ENCODE measurements at regions of chr2 and their contacts with region 1.

Region 1: DNA sequence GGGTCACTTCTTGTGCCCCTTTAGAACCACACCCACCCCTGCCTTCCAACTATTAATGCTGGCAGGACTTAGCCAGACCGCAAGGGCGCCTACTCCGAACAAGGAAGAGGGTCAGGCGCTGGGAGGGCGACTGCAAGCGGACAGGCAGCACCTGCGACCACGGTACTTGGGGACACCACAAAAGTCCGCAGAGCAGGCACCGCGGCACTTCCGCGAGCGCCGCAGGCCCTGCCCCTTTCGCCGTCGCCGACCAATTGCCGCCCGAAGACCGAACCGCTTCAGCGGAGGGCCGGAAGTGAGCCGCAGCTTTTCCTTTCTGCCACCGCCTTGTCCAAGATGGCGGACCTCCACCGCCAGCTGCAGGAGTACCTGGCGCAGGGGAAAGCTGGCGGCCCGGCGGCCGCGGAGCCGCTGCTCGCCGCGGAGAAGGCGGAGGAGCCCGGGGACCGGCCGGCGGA is at the start of gene SFT2D3:
- DNase-seq: peak; percentile 89
- H3K4me3 Mint-ChIP-seq: peak within 1 kb of the TSS; percentile 92
- H3K27ac Mint-ChIP-seq: peak within 1 kb of the TSS; percentile 97
- H3K4me1 Mint-ChIP-seq: peaks cover 35% of the 10 kb centered on the region
- H3K27me3 Mint-ChIP-seq: no peaks in the 10 kb centered on the region
- total RNA-seq, gene SFT2D3: 6.6 and 7.1 TPM in 2 replicates

Region 2: DNA sequence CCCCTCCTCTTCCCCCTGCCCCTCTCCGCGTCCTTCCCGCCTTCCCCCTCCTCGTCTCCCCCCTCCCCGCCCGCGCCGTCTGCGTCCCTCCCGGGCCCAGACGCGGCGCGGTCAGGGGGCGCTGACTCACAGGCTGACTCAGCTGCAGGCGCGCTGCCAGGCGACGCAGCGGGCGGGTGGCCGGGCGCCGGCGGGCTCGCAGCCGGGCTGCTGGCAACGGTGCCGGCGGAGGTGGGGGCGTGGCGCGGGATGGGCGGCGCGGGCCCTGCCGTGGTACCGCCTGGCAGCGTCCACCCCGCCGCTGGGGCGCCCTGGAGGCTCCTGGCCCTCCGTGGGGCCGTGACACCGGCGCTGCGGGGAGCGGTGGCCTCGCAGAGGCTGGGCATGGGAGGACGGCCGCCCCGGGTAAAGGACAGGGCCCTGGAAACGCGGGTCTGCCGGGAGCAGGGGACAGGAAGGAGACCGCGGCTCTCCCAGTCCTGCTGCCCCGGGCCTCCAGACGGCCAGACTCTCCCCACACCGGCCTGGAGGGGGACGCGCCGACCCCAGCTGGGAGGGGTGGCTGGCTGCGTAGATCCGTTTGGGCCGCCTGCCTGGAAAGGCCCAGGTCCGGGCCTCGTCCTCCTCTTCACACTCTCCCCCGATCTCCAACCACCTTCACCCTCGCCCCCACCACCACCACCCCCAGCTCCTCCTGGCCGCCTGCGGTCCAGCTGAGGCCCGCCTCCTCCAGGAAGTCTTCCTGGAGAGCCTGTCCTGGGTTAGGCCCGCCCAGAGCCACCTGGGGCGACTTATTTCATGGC is 293.0 kb before region 1 on chr2:
- intact Hi-C with region 1: loop called (anchors 5 kb)
- DNase-seq: peak; percentile 80
- H3K4me3 Mint-ChIP-seq: peak overlapping the region; percentile 53
- H3K27ac Mint-ChIP-seq: peak overlapping the region; percentile 71
- H3K4me1 Mint-ChIP-seq: peaks cover 28% of the 10 kb centered on the region
- H3K27me3 Mint-ChIP-seq: peaks cover 15% of the 10 kb centered on the region

Region 3: GRCh38 chr2:127649684-127650040 is 51.6 kb before region 1 on chr2:
- intact Hi-C with region 1: loop called (anchors 2 kb)
- DNase-seq: peak; percentile 68
- H3K4me3 Mint-ChIP-seq: no peak overlapping the region
- H3K27ac Mint-ChIP-seq: no peak overlapping the region
- H3K4me1 Mint-ChIP-seq: peaks cover 5% of the 10 kb centered on the region
- H3K27me3 Mint-ChIP-seq: peaks cover 2% of the 10 kb centered on the region

Region 4: DNA sequence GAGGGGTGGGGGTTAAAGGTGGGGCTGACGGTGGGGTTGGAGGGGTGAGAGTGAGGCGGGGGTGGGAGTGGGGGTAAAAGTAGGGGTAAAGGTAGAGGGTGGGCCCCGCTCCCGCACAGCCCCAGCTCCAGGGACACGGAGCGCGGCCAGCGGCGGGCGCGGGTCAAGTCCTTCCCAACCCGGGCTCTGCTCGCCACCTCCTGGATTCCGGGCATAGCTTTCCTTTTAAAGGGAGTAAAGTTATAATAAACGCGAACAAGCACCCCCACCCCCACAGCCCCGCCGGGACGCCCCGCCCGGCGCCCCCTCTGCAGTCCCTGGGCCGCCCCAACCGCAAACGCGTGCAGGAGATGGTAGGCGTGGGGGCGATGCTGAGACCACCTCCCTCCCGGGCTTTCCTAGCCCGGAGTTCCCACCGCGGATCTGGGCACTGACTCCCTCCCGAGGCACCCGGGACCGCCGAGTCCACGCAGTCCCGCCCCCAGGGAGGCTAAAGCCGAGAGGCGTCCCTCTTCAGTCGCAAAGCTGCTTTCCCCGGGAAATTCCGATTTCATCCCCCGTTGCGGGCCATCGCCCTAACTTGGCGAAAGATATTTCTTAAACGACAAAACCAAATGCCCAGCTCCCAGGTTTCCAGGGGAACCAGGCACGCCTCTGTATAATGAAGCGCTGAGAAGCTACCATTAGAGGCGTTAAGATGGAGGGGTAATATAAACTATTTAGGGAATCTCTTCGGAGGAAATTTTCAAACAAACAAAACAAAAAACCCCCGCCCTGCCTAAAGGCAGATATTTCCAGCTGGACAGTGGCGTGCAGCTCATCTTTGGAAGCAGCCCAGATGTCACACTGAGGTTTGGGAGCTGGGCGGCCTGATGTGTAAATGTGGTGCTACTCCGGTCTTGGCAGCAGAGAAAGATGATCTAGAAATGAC is 25.6 kb before region 1 on chr2 and contains the start of gene LIMS2:
- intact Hi-C with region 1: no loop called
- DNase-seq: no peak
- H3K4me3 Mint-ChIP-seq: peak within 1 kb of the TSS; percentile 72
- H3K27ac Mint-ChIP-seq: no peak within 1 kb of the TSS
- H3K4me1 Mint-ChIP-seq: peaks cover 10% of the 10 kb centered on the region
- H3K27me3 Mint-ChIP-seq: peaks cover 53% of the 10 kb centered on the region
- total RNA-seq, gene LIMS2: 4.8 and 5.1 TPM in 2 replicates

Region 5: DNA sequence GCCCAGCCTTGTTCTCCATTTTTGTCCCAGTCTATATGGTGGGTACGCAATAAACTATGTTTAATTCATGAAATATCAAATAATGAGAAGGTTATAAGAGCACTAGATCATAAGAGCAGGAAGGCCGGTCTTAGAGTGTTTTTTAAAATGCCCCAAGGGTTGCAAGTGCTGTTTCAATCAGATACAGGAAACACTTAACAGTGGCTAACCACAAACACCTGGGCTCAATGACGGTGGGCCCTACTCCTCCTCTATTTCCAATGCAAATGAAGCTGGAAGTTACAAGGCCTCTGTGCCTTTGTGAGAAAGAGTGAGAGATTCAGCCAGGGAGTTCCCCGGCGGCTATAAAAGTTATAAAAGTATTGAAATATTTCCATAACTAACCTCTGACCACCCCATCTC is 128.6 kb after region 1 on chr2:
- intact Hi-C with region 1: loop called (anchors 1 kb)
- DNase-seq: peak; percentile 62
- H3K4me3 Mint-ChIP-seq: peak overlapping the region; percentile 20
- H3K27ac Mint-ChIP-seq: peak overlapping the region; percentile 85
- H3K4me1 Mint-ChIP-seq: peaks cover 45% of the 10 kb centered on the region
- H3K27me3 Mint-ChIP-seq: peaks cover 4% of the 10 kb centered on the region

Region 6: GRCh38 chr2:128027801-128028667 is 326.8 kb after region 1 on chr2 and contains the start of gene SAP130:
- intact Hi-C with region 1: loop called (anchors 1 kb)
- DNase-seq: peak; percentile 99
- H3K4me3 Mint-ChIP-seq: peak within 1 kb of the TSS; percentile 99
- H3K27ac Mint-ChIP-seq: peak within 1 kb of the TSS; percentile 93
- H3K4me1 Mint-ChIP-seq: peaks cover 23% of the 10 kb centered on the region
- H3K27me3 Mint-ChIP-seq: peaks cover 4% of the 10 kb centered on the region
- total RNA-seq, gene SAP130: 30.9 and 31.5 TPM in 2 replicates